ENCODE measurements at regions of chr16 and their contacts with region 1.

Region 1: GRCh38 chr16:62240722-62241121 is 204.5 kb upstream of the CDH8 start:
- DNase-seq: no peak
- ATAC-seq: no peak
- H3K4me3 Mint-ChIP-seq: no peak overlapping the region
- H3K27ac Mint-ChIP-seq: no peak overlapping the region
- H3K4me1 Mint-ChIP-seq: no peaks in the 10 kb centered on the region
- H3K27me3 Mint-ChIP-seq: no peaks in the 10 kb centered on the region

Region 2: DNA sequence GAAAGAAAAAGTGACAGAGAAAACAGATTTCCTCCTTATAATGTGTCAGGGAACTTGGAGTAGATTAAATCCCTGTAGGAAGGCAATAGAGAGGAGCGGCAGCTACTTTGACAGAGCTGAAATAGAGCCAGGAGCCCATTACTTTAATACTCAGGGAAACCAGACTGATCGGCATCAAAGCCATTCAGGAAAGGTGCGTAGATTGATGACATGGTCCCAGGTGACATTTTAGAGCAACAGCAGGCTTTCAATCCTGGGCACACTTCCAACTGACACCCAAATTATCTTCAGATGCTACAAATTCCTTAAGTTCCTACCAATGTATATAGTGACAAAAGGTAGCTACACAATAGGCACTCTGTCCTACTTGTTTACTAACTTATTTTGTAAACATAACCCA is 1025.9 kb before region 1 on chr16:
- CTCF ChIA-PET with region 1: no interaction called
- POLR2A ChIA-PET with region 1: no interaction called
- intact Hi-C with region 1: no loop called
- DNase-seq: no peak
- ATAC-seq: no peak
- H3K4me3 Mint-ChIP-seq: no peak overlapping the region
- H3K27ac Mint-ChIP-seq: no peak overlapping the region
- H3K4me1 Mint-ChIP-seq: no peaks in the 10 kb centered on the region
- H3K27me3 Mint-ChIP-seq: no peaks in the 10 kb centered on the region

Region 3: DNA sequence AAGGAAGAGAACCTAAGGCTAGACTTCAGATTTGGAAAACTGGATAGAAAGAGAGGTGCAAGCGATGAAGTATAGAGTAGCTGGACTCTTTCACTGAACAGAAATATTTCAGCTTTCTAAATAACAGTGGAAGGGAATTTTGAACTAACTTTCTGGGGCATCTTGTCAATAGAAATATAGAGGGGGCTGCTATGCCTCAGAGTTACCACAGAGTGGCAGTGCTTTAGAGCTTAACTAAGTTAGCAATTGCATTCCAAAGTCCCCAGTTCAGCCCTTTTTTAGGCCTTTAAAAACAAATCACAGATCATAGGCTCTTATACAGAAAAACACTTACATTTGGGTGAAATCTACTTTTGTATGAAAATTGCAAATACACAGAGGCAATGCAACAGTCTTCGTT is 50.3 kb before region 1 on chr16:
- CTCF ChIA-PET with region 1: no interaction called
- POLR2A ChIA-PET with region 1: no interaction called
- intact Hi-C with region 1: loop called in 1 of 2 experiments (anchors 10 kb)
- DNase-seq: no peak
- ATAC-seq: no peak
- H3K4me3 Mint-ChIP-seq: no peak overlapping the region
- H3K27ac Mint-ChIP-seq: no peak overlapping the region
- H3K4me1 Mint-ChIP-seq: no peaks in the 10 kb centered on the region
- H3K27me3 Mint-ChIP-seq: no peaks in the 10 kb centered on the region

Region 4: DNA sequence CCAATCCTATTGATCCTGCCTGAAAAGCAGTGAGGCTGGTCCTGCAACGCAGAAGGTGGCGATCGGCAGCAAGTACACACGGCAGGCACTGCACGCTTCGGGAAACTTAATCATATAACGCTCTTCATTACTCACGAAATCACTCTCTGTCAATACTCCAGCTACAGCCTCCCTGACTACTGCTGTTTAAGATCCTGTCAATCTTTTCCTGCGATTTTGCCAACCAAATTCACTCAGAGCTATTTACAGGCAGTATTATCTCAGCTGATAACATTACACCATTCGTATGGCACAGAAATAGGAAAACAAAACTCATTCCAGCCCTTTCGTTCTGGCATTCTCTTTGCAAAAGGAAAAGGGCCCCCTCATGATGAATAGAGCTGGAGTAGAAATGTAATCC is 57.9 kb after region 1 on chr16:
- CTCF ChIA-PET with region 1: no interaction called
- POLR2A ChIA-PET with region 1: no interaction called
- intact Hi-C with region 1: loop called in 1 of 2 experiments (anchors 10 kb)
- DNase-seq: no peak
- ATAC-seq: no peak
- H3K4me3 Mint-ChIP-seq: no peak overlapping the region
- H3K27ac Mint-ChIP-seq: no peak overlapping the region
- H3K4me1 Mint-ChIP-seq: no peaks in the 10 kb centered on the region
- H3K27me3 Mint-ChIP-seq: no peaks in the 10 kb centered on the region

Measured in activated CD4-positive, alpha-beta T cell treated with anti-CD3 and anti-CD28 coated beads for 36 hours (primary cell).